ENCODE measurements at regions of chr1 and their contacts with region 1.

Region 1: DNA sequence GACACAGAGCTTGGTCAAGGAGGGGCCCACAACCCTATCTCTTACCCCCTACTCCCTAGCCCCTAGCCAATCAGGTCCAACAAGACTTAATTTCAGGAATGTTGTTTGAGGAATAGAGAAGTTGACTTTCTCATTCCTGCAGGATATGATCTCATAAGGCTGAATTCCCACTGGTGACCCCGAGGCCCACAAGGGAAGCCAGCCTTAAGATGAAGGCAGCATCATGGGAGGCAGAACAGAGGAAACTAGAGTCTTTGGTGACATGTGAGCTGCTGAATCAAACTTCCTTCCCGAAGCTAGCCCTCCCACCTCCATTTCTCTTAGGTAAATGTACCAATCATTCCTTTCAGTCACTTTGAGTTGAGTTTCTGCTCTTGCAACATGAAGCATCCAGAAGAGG is 9.1 kb upstream of the PDIK1L start:
- DNase-seq: no peak
- H3K4me3 ChIP-seq: no peak overlapping the region
- H3K27ac ChIP-seq: no peak overlapping the region
- H3K4me1 ChIP-seq: peaks cover 4% of the 10 kb centered on the region
- H3K27me3 ChIP-seq: no peaks in the 10 kb centered on the region
- CTCF ChIP-seq: no peak
- POLR2A ChIP-seq: no peak

Region 2: DNA sequence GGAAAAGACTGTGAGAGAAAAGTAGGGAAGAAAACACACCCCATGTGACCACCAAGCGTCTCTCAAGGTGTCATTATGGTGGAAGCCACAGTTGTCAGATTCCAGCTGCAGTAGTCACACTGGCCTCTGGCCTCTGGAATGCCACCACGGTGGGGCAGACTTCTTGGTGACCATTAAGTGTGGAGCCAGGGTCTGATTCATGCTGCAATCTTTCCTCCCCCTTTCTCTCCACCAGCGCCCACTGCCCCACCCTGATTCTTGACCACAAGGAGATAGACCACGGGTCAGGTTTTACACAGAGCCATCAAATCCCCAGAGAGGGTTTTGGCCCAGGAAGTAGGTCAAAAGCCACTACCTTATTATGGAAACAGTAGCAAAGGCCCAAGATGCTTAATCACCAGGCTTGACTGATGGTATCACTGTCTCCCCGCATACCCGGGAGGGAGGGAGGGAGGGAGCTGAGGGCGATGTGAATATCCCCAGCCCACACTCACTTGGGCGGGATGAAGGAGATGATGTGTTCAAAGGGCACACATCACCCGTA is 1836.1 kb before region 1 on chr1:
- intact Hi-C with region 1: no loop called
- DNase-seq: no peak
- H3K4me3 ChIP-seq: no peak overlapping the region
- H3K27ac ChIP-seq: no peak overlapping the region
- H3K4me1 ChIP-seq: no peaks in the 10 kb centered on the region
- H3K27me3 ChIP-seq: no peaks in the 10 kb centered on the region
- CTCF ChIP-seq: no peak
- POLR2A ChIP-seq: no peak

Region 3: GRCh38 chr1:24351247-24351646 is 1751.3 kb before region 1 on chr1:
- intact Hi-C with region 1: no loop called
- DNase-seq: no peak
- H3K4me3 ChIP-seq: no peak overlapping the region
- H3K27ac ChIP-seq: no peak overlapping the region
- H3K4me1 ChIP-seq: no peaks in the 10 kb centered on the region
- H3K27me3 ChIP-seq: no peaks in the 10 kb centered on the region
- CTCF ChIP-seq: no peak
- POLR2A ChIP-seq: no peak

Region 4: DNA sequence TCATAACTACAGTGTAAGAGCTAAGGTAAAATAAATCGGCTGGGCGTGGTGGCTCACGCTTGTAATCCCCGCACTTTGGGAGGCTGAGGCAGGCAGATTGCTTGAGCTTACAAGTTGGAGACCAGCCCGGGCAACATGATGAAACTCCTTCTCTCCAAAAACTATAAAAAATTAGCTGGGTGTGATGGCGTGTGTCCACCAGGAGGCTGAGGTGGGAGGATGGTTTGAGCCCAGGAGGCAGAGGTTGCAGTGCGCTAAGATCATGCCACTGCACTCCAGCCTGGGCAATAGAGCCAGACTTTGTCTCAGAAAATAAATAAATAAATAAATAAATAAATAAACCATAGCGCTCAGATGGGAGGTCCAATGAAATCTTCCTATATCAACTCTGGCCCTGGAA is 39.6 kb after region 1 on chr1:
- intact Hi-C with region 1: loop called (anchors 5 kb)
- DNase-seq: no peak
- H3K4me3 ChIP-seq: no peak overlapping the region
- H3K27ac ChIP-seq: no peak overlapping the region
- H3K4me1 ChIP-seq: peaks cover 4% of the 10 kb centered on the region
- H3K27me3 ChIP-seq: no peaks in the 10 kb centered on the region
- CTCF ChIP-seq: no peak
- POLR2A ChIP-seq: no peak

Measured in vagina (tissue), 2 donors.